WTC11 (cell line): ENCODE measurements at regions of chr9 and their contacts with region 1.

Region 1: DNA sequence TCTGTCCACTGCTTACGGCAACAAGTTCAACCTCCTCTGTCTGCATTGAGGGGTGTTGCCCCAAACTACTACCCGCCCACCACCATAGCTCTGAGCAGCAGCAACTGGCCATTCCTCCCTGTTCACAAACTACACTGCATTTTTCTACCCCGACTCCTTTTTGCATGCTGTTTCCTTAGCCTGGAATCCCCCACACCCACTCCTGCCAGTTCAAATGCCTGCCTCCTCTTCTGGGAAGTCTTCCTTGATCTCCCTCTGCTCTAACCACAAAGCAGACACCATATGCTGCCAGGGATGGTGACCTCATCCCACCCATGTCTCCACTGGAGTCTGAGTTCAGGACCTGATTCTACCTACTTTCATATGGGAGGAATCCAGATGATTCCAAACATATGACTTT is 13.3 kb downstream of the ALDH1B1 start:
- DNase-seq: no peak
- ATAC-seq: no peak
- H3K4me3 Mint-ChIP-seq: no peak overlapping the region
- H3K27ac Mint-ChIP-seq: no peak overlapping the region
- H3K4me1 Mint-ChIP-seq: peaks cover 6% of the 10 kb centered on the region
- H3K27me3 Mint-ChIP-seq: no peaks in the 10 kb centered on the region
- CTCF ChIP-seq: no peak

Region 2: GRCh38 chr9:38747067-38747466 is 341.3 kb after region 1 on chr9:
- CTCF ChIA-PET with region 1: no interaction called
- POLR2A ChIA-PET with region 1: interaction called, 10 read pairs
- DNase-seq: no peak
- ATAC-seq: no peak
- H3K4me3 Mint-ChIP-seq: no peak overlapping the region
- H3K27ac Mint-ChIP-seq: 0 out of 2 replicates have a peak overlapping the region, but pooled peaks have one; percentile 1
- H3K4me1 Mint-ChIP-seq: peaks cover 2% of the 10 kb centered on the region
- H3K27me3 Mint-ChIP-seq: no peaks in the 10 kb centered on the region
- CTCF ChIP-seq: no peak